Activated CD4-positive, alpha-beta memory T cell treated with anti-CD3 and anti-CD28 coated beads, Interleukin-2, amount 10 ng/mL, durations not matched to agents 7 days and 5 days (primary cell): ENCODE measurements at regions of chr10 and their contacts with region 1.

Region 1: GRCh38 chr10:49538381-49539319 is at the start of gene ERCC6:
- DNase-seq: peak; percentile 98
- H3K4me3 Mint-ChIP-seq: peak within 1 kb of the TSS; percentile 87
- H3K27ac Mint-ChIP-seq: peak within 1 kb of the TSS; percentile 92
- H3K4me1 Mint-ChIP-seq: peaks cover 39% of the 10 kb centered on the region
- H3K27me3 Mint-ChIP-seq: peaks cover 7% of the 10 kb centered on the region
- total RNA-seq, gene ERCC6: 24.9 to 29.2 TPM

Region 2: DNA sequence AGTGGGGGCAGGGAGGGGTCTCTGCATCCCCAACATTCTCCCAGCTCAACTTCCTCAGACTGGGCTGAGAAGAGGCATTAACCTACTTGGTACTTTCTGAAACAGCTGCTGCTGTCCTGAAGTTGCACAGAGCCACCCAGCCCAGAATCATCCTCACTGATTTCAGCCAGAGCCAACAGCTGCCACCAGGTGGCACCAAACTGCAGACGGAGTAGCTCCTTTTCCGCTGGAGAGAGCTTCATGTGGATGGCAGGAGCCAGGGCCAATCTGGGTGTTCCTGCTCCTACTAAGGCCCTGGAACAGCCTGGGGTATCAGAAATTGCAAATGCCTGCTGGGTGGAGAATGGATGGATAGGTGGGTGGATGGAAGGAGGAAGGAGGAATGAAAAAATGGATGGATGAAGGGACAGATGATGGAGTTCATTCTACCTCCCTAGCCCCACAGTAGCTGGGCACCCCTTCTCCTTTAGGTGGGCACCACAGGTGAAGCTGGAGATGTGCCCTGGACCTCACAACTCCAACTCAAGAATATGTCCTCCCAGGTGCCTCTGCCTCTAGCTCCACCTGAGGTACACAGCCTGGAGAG is 131.0 kb before region 1 on chr10:
- CTCF ChIA-PET with region 1: interaction called, 10 read pairs
- POLR2A ChIA-PET with region 1: no interaction called
- DNase-seq: peak; percentile 79
- H3K4me3 Mint-ChIP-seq: no peak overlapping the region
- H3K27ac Mint-ChIP-seq: no peak overlapping the region
- H3K4me1 Mint-ChIP-seq: no peaks in the 10 kb centered on the region
- H3K27me3 Mint-ChIP-seq: peaks cover 26% of the 10 kb centered on the region

Region 3: GRCh38 chr10:49552249-49552672 is 13.6 kb after region 1 on chr10:
- CTCF ChIA-PET with region 1: no interaction called
- POLR2A ChIA-PET with region 1: interaction called, 11 read pairs
- DNase-seq: no peak
- H3K4me3 Mint-ChIP-seq: no peak overlapping the region
- H3K27ac Mint-ChIP-seq: no peak overlapping the region
- H3K4me1 Mint-ChIP-seq: no peaks in the 10 kb centered on the region
- H3K27me3 Mint-ChIP-seq: peaks cover 22% of the 10 kb centered on the region

Region 4: GRCh38 chr10:49575489-49576072 is 36.9 kb after region 1 on chr10:
- CTCF ChIA-PET with region 1: no interaction called
- POLR2A ChIA-PET with region 1: no interaction called
- DNase-seq: no peak
- H3K4me3 Mint-ChIP-seq: no peak overlapping the region
- H3K27ac Mint-ChIP-seq: no peak overlapping the region
- H3K4me1 Mint-ChIP-seq: peaks cover 8% of the 10 kb centered on the region
- H3K27me3 Mint-ChIP-seq: peaks cover 3% of the 10 kb centered on the region

Region 5: GRCh38 chr10:49649294-49649693 is 110.6 kb after region 1 on chr10:
- CTCF ChIA-PET with region 1: no interaction called
- POLR2A ChIA-PET with region 1: no interaction called
- DNase-seq: peak; percentile 62
- H3K4me3 Mint-ChIP-seq: no peak overlapping the region
- H3K27ac Mint-ChIP-seq: no peak overlapping the region
- H3K4me1 Mint-ChIP-seq: peaks cover 18% of the 10 kb centered on the region
- H3K27me3 Mint-ChIP-seq: peaks cover 2% of the 10 kb centered on the region